Colonic mucosa (tissue), 4 donors: ENCODE measurements at regions of chr3 and their contacts with region 1.

Region 1: DNA sequence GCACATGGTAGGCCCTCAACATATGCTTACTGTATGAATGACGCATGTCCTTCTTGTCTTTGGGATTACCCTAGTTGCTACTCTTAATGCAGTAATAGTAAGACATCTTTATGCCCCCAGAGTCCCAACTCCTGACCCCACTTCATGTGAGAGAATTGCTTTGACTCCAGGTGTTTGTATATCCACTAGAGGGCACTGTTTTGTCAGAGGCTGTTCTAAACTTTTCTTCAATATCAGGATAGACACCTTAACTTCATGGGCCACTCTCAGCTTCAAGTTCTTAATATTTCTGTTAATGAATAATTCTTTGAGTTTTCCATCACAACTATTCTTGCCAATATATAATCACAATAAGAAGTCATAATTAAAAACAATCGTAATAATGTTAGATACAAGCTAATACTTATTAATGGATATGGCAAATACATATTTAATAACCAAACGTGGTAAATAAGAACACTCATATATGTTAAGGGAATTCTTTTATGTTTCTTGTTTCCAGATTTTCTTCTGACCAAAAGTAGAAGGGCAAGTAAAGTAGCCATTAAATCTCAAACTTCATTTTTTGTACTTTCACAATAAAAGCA is 337.2 kb upstream of the DNAJC19 start:
- DNase-seq: no peak
- H3K4me3 ChIP-seq: no peak overlapping the region
- H3K27ac ChIP-seq: no peak overlapping the region
- H3K4me1 ChIP-seq: no peaks in the 10 kb centered on the region
- H3K27me3 ChIP-seq: no peaks in the 10 kb centered on the region
- CTCF ChIP-seq: peak; percentile 64

Region 2: GRCh38 chr3:181103605-181104004 is 223.1 kb before region 1 on chr3:
- intact Hi-C with region 1: no loop called
- DNase-seq: no peak
- H3K4me3 ChIP-seq: no peak overlapping the region
- H3K27ac ChIP-seq: no peak overlapping the region
- H3K4me1 ChIP-seq: no peaks in the 10 kb centered on the region
- H3K27me3 ChIP-seq: no peaks in the 10 kb centered on the region
- CTCF ChIP-seq: no peak

Region 3: GRCh38 chr3:181700168-181701087 is 373.7 kb after region 1 on chr3:
- intact Hi-C with region 1: loop called (anchors 2 kb)
- DNase-seq: peak; percentile 71
- H3K4me3 ChIP-seq: no peak overlapping the region
- H3K27ac ChIP-seq: no peak overlapping the region
- H3K4me1 ChIP-seq: peaks cover 3% of the 10 kb centered on the region
- H3K27me3 ChIP-seq: peaks cover 90% of the 10 kb centered on the region
- CTCF ChIP-seq: peak; percentile 80

Region 4: DNA sequence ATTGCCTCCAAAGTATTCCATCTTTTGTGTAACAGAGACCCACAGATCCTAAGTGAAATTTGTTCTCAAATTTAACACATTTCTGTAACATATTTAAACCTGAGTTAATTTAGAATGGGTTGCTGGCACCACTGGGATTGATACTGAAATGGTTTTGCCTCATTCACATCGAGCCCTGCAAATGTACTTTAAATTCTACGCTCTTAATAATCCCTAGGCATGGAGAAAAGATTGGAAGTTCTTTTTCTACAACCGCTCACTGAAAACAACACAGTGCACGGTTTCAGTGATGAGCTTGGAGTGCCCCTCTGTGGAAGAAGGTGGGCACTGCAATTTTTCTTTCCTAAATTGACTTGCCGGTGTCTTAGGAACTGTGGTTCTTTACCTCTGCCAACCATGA is 1356.7 kb after region 1 on chr3:
- intact Hi-C with region 1: loop called (anchors 5 kb)
- DNase-seq: peak; percentile 82
- H3K4me3 ChIP-seq: peak overlapping the region; percentile 46
- H3K27ac ChIP-seq: peak overlapping the region; percentile 68
- H3K4me1 ChIP-seq: no peaks in the 10 kb centered on the region
- H3K27me3 ChIP-seq: no peaks in the 10 kb centered on the region
- CTCF ChIP-seq: peak; percentile 89